PC-9 (cell line): ENCODE measurements at regions of chr20 and their contacts with region 1.

Region 1: DNA sequence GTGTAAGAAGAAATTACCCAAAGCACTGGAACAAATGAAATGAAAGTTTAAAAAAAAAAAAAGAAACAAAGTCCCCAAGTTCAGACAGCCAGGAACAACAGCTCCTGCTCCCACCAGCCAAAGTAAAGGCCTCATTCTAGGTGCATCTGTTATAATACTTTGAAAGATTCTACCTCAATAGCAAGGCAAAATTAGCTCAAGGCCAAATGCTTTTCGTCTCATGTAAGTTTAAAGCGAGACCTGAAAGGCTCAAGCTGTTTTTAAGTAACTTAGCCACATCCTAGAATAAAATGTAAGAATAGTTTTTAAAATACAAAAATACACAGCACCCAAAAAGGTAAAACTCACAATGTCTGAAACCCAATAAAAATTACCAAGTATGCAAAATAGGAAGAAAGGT is 64.7 kb downstream of the TASP1 start:
- DNase-seq: no peak
- H3K4me3 ChIP-seq: no peak overlapping the region
- H3K27ac ChIP-seq: no peak overlapping the region
- H3K4me1 ChIP-seq: no peaks in the 10 kb centered on the region
- H3K27me3 ChIP-seq: no peaks in the 10 kb centered on the region
- CTCF ChIP-seq: no peak

Region 2: DNA sequence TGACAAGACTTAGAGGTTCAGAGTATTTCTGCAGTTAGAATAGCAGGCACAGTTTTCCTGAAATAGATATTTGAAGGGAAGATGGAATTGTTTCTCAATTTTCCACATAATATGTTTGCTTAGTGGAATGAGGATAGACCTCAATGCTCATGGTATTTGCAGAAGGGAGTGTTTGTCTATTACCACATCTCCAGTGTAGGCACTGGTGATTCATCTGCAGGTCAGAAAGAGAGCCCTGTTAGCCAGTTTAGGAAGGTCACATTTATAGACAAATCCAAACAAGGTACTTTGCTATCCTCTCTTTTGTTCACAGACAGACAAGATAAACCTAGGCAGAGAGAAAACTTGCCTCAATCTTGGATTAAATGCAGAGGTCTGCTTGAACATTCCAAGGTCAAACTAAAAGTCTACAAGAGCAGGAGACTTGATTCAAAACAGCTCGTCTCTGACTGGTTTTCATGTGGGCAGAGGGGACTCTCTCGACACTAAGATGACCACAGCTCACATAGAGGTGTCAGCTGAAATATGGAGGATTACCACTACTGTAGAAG is 330.2 kb before region 1 on chr20:
- CTCF ChIA-PET with region 1: no interaction called
- POLR2A ChIA-PET with region 1: interaction called, 10 read pairs
- intact Hi-C with region 1: no loop called
- DNase-seq: peak in 1 of 2 experiments; percentile 78
- H3K4me3 ChIP-seq: no peak overlapping the region
- H3K27ac ChIP-seq: no peak overlapping the region
- H3K4me1 ChIP-seq: peaks cover 47% of the 10 kb centered on the region
- H3K27me3 ChIP-seq: no peaks in the 10 kb centered on the region
- CTCF ChIP-seq: no peak